ENCODE measurements at regions of chr9 and their contacts with region 1.

Region 1: DNA sequence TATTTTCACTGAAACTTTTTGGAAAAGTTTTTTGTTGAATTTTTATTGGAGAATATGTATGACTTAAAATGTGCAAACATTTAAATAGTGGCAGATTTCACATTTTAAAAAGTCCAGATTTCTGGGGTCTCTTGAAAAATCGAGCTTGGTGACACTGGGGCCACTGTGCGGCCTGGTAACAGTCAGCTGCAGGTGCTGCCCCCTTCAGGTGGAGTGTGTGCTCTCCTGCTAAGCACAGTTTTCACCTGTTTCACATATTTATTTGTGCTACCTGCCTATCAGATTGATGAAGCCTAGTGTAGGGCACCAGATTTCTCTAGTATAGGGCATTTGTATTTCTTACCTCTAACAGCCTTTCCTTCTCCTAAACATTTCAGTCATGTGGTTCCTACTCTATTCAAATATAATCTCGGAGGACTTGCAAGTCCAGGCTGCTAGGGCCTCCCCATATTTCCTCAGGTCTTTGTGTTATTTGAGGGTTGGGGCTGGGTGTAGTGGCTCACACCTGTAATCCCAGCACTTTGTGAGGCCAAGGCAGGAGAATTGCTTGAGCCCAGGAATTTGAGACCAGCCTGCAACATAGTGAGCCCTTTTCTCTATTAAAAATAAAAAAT is 95.8 kb upstream of the KLF9 start:
- DNase-seq: no peak
- H3K4me3 ChIP-seq: no peak overlapping the region
- CTCF ChIP-seq: peak; percentile 39

Region 2: DNA sequence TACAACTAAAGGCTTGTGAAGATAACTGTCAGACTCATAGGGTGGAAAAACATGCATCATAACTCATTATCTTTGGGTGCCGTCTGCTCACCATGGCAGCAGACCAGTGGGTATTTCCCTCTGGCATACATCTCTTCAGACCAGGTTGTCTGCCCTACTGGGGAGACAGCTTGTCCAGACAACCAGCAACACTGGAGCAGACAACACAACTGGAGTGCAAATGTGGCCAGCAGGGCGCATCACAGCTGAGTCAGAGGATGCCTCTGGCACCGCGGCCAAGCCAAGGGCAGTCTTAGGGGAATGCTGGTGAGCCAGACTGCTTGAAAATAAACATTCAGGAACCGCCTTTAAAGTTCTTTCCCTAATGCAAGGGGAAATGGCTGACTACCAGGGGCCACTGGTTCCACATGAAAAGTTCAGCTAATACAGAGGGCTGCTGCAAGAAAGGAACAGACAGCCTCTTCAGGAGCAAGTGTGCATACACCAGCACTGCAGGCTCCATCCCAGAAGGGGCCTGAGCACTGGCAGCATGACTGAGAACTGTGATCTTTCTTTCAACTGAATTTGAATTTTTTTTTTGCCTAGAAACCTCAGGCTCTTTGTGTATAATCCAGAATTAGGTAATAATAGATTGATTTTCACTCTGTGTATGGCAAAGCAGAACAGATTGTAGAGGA is 389.3 kb before region 1 on chr9:
- CTCF ChIA-PET with region 1: no interaction called
- POLR2A ChIA-PET with region 1: no interaction called
- DNase-seq: peak; percentile 85
- H3K4me3 ChIP-seq: no peak overlapping the region
- CTCF ChIP-seq: peak; percentile 58

Region 3: GRCh38 chr9:70494221-70494620 is 16.0 kb before region 1 on chr9:
- CTCF ChIA-PET with region 1: interaction called, 30 read pairs
- POLR2A ChIA-PET with region 1: no interaction called
- DNase-seq: no peak
- H3K4me3 ChIP-seq: no peak overlapping the region
- CTCF ChIP-seq: no peak

Measured in AG04449 (cell line).